ENCODE measurements at regions of chr2 and their contacts with region 1.

Region 1: DNA sequence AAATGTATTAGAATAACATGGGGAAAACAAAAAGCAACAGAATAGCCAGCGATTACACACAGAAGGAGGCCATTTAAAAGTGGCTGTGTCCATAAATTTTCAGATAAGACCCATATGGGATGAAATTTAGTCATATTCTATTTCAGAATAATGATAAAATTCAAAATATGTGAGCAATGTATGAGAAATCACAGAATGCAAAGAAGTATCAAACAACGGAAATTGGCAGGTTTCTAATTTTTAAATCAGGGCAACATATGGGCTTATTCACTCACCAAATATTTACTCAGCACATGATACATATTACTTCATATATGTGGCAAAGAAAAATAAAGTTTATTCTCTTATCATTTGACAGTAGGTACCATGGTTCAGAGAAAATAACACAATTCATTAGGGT is 208.5 kb downstream of the GRB14 start:
- DNase-seq: no peak
- ATAC-seq: no peak
- H3K4me3 ChIP-seq: no peak overlapping the region
- H3K27ac ChIP-seq: no peak overlapping the region
- H3K4me1 ChIP-seq: no peaks in the 10 kb centered on the region
- H3K27me3 ChIP-seq: no peaks in the 10 kb centered on the region
- CTCF ChIP-seq: no peak
- POLR2A ChIP-seq: no peak

Region 2: DNA sequence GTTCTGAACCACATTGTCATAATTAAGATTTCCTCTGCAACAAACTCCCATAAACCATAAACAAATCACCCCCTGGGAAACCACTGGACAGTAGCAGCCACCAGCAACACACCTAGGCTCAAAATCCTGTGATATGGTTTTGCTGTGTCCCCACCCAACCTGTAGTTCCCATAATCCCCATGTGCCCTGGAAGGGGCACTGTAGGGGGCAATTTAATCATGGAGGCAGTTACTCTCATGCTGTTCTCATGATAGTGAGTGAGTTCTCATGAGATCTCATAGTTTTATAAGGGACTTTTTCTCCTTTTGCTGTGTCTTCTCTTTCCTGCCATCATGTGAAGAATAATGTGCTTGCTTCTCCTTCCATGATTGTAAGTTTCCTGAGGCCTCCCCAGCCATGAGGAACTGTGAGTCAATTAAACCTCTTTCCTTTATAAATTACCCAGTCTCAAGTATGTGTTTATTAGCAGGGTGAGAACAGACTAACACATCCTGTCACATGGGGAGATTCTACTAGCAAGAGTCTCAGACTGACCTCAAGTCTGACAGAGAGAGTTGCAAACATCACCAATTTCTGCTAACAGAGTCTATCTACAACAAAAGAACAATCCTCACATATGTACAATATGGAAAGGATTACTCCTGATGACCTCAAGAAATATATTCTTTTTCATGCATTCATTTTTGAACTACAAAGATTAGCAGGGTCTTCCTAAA is 25.8 kb after region 1 on chr2:
- intact Hi-C with region 1: loop called in 1 of 10 experiments (anchors 2 kb)
- DNase-seq: no peak
- ATAC-seq: no peak
- H3K4me3 ChIP-seq: no peak overlapping the region
- H3K27ac ChIP-seq: no peak overlapping the region
- H3K4me1 ChIP-seq: no peaks in the 10 kb centered on the region
- H3K27me3 ChIP-seq: peaks cover 0 to 6% (median 0%) of the 10 kb centered on the region in 9 donors
- CTCF ChIP-seq: no peak
- POLR2A ChIP-seq: no peak